HEK293T (cell line): ENCODE measurements at regions of chr6 and their contacts with region 1.

Region 1: DNA sequence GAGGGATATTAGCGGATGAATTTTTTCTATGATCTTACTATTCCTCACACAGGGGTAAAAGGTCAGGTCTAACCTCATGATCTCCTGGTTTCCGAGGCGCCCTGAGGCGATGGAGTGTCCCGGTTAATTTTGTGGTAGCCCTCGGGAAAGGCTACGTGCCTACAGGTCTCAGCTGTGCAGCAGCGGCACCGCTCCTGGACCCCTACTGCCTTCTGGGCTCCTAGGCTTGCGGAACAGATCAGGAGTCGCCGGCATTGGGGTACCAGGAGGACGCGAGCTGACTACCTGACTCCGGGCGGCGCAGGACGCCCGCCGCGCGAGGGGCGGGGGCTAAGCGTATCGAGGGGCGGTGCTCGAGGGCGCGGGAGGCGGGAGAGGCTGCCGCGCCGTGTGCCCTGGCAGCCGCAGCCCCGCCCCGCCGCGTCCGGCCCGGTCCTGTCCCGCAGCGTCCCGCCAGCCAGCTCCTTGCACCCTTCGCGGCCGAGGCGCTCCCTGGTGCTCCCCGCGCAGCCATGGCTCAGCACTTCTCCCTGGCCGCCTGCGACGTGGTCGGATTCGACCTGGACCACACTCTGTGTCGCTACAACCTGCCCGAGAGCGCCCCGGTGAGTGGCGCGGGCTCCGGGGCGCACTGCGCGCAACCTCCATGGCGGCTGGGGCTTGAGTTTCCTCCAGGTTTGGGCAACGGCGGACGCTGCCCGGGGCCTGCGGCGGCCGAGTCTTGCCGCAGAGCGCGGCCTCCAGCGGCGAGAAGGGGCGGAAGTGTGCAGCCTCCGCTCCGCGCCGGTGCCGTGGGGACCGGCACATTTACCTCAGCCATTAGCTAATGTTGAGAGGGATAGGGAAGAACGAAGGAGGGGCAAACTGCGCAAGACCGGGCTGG is at the start of gene NT5DC1:
- DNase-seq: peak; percentile 93

Region 2: GRCh38 chr6:115854866-115855665 is 245.6 kb before region 1 on chr6:
- CTCF ChIA-PET with region 1: no interaction called
- POLR2A ChIA-PET with region 1: no interaction called
- DNase-seq: no peak

Region 3: DNA sequence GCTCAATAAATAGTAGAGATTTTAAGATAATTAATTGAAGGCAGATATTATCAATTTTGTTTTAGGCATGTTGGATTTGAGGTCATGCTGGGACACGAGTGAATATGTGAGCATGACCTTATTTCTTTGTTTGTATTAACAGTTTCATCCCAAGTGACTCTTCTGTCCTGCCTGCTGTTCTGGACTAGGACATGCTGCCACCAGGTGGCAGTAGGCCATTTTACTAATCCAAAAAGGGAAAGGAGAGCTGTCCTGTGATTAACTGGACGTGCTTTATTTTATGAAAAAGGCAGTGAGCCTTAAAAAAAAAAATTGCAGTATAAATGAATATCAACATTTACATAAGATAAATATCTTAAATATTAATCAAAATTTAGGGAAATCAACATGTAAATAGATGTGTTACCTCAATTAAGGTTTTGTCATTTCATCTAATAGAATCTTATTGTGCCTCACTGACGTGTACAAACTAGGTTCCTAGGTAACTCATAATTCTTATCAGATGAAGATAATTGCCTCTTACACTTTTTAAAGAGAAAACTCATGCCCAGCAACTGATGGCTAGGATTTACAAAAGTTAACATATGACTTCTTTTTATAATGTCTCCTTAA is 89.8 kb before region 1 on chr6:
- CTCF ChIA-PET with region 1: interaction called, 3 read pairs
- POLR2A ChIA-PET with region 1: interaction called, 19 read pairs
- DNase-seq: peak; percentile 66

Region 4: DNA sequence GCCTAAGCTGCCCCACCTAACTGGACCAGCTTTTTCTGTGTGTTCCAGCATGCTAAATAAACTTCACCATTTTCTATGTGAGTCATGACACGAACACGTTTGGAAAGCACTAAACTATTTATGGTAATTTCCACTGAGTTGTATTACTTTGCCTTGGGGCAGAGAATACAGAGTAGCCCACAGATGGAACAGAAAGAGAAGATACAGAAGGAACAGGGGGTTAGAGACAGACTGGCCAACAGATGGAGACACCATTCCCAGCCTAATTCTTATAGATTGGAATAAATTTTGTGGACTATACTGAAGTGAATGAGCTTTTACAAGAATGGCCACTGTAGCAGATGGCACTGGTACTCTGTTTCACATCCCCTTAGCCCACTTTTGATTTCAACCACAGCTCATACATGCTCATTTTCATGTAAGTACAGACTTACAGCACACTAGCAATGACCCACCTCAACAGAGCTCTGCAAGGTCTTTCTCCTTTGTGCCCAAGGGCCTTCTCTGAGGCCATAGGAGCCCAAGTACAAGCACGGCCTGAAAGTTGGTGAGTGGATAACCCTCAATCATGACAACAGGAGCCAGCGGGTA is 13.1 kb before region 1 on chr6:
- CTCF ChIA-PET with region 1: no interaction called
- POLR2A ChIA-PET with region 1: interaction called, 17 read pairs
- DNase-seq: no peak

Region 5: DNA sequence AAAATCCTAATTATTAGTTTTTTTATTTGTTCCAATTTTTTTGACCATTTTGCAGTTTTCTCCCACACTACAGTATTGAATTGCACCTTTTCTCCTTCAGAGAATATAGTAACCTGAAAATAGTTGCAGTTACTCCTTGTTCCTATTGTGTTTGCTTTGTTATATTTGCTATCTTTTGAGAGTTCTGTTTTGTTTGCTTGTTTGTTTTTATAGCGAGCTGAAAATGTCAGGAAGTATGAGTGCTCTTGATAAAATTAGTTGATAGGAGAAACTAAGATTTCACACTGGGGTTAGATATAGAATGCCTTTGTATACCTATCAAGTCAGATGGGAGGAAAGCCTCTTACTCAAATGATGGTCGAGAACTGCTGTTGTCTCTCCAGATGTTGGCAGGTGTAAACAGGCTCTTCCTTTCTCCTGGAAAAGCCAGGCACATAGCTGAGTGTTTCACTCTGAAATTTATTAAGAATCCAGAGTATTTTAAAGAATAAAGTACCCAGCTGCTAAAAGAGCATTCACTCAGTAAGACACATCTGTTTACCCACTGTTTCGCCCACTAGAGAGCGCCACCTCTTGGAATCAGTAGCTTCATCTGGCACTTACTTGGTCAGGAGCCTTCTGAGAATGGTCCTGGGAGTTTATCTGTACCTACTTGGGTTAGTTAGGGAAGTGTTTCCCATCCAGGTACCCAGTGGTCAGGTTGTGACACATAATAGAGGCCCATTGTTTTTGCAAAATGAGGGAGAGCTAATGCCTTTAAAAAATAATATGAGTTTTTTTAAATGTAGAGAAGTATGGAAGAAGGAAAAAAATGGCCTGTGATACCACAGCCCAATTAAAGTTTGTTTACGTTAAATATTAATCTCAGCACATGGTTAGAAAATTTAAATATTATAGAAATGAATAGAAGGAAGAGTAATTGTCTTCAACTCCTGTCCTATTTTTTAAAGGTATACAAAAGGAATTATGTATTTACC is 11.2 kb after region 1 on chr6:
- CTCF ChIA-PET with region 1: interaction called, 26 read pairs
- POLR2A ChIA-PET with region 1: interaction called, 24 read pairs
- DNase-seq: peak; percentile 49